ENCODE measurements at regions of chr14 and their contacts with region 1.

Region 1: DNA sequence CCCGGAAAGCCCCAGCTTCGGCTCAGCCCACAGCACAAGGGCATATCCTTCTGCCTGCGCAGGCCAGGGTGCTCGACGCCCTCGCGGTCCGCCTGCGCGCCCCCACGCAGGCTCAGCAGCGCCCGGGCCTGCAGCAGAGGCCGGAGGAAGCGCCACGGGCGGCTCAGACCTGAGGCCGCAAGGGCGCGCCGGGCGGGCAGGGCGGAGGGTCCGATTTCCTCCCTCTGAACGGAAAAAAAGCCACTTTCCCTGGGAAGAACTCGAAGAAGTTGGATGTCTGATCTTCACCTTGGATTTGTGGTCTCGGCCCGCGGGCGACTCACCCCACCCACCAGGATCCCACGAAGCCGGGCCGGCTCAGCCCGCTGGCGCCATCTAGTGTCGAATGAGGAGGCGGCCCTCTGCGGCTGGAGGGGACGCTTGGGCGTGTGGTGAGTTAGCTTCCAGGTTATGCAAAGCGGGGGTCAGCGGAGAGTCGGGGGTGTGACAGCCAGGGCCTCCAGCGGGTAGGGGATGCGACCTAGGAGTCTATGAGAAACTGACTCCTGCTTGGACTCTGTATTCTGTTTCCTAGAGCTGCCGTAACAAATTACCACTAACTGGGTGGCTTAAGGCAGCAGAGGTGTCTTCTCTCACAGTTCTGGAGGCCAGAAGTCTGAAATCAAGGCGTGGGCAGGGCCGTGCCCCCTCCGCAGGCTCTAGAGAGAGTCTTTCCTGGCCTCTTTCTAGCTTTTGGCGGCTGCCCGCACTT is 40.0 kb upstream of the SRSF5 start:
- DNase-seq: peak; percentile 75
- H3K4me3 ChIP-seq: peak overlapping the region; percentile 2 to 40 (median 18)
- H3K27ac ChIP-seq: peak overlapping the region; percentile 20
- H3K4me1 ChIP-seq: peaks cover 5% of the 10 kb centered on the region
- H3K27me3 ChIP-seq: no peaks in the 10 kb centered on the region
- CTCF ChIP-seq: peak; percentile 98 to 99
- POLR2A ChIP-seq: no peak

Region 2: GRCh38 chr14:69475194-69475818 is 251.6 kb before region 1 on chr14:
- CTCF ChIA-PET with region 1: interaction called, 3 read pairs
- POLR2A ChIA-PET with region 1: no interaction called
- dilution Hi-C with region 1: no loop called
- intact Hi-C with region 1: loop called (anchors 10 kb)
- DNase-seq: peak; percentile 25
- H3K4me3 ChIP-seq: no peak overlapping the region
- H3K27ac ChIP-seq: no peak overlapping the region
- H3K4me1 ChIP-seq: no peaks in the 10 kb centered on the region
- H3K27me3 ChIP-seq: peaks cover 0 to 3% of the 10 kb centered on the region in 2 experiments
- CTCF ChIP-seq: peak; percentile 25 to 34
- POLR2A ChIP-seq: no peak

Region 3: DNA sequence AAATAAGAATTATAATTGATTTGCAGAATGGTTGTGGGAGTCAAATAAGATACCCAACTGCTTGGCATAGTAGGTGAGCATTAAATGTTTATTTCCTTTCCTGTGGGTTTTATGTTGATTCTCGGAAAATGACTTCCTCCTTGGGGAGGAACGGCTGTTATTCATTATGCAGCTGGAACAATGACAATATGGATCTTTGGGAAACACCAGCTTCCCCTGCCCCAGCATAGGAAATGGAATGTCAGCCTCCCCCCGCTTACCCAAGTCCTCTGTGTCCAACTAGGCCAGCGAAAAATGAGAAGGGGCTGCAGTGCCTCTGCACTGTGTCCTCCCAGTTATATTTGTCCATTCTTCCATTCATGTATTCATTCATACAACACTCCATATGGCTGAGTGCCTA is 140.5 kb before region 1 on chr14:
- CTCF ChIA-PET with region 1: interaction called, 124 read pairs
- POLR2A ChIA-PET with region 1: no interaction called
- dilution Hi-C with region 1: no loop called
- intact Hi-C with region 1: loop called (anchors 1 kb)
- DNase-seq: peak; percentile 90
- H3K4me3 ChIP-seq: no peak overlapping the region
- H3K27ac ChIP-seq: no peak overlapping the region
- H3K4me1 ChIP-seq: peaks cover 20% of the 10 kb centered on the region
- H3K27me3 ChIP-seq: no peaks in the 10 kb centered on the region
- CTCF ChIP-seq: no peak
- POLR2A ChIP-seq: no peak

Region 4: DNA sequence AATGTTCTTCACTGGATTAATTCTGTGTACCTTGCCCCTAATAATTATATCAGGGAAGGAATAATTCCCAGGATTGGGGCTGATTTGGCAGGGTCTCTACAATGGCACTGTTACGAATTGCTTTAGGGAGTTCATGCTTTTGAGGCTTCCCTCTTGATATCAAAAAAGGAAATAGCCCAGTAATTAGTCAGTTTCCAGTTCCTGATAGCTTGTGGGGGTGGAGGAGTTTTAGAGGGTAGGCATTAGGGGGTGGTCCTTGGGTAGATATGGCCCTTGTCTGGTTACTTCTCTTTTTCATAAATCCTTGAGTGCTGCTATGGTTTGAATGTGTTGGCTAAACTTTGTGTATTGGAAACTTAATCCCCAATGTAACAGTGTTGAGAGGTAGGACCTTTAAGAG is 33.9 kb after region 1 on chr14:
- CTCF ChIA-PET with region 1: interaction called, 23 read pairs
- POLR2A ChIA-PET with region 1: no interaction called
- dilution Hi-C with region 1: no loop called
- intact Hi-C with region 1: loop called (anchors 1 kb)
- DNase-seq: peak; percentile 70
- H3K4me3 ChIP-seq: peak overlapping the region in 1 of 3 experiments; percentile 36
- H3K27ac ChIP-seq: peak overlapping the region; percentile 83
- H3K4me1 ChIP-seq: peaks cover 19% of the 10 kb centered on the region
- H3K27me3 ChIP-seq: no peaks in the 10 kb centered on the region
- CTCF ChIP-seq: no peak
- POLR2A ChIP-seq: peak; percentile 40

Region 5: DNA sequence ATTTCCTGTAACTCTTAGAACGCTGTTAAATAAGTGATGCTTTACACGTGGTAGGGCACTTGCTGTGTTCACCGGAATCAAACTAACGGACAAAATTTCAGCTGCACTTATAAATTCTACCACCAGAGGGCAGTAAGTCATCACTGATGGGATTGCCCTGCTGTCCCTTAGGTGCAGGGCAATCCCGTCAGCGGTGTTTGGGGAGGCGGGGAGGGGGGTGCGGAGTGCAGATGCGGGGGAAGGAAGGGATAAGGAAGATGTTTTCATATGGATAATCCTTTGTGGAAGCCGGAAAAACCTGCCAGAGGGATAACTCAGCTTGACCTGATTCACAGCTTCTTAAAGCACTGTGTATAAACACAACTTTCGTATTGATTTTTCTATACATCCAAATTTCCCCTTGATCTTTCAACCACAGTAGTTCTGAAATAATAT is 91.8 kb after region 1 on chr14:
- CTCF ChIA-PET with region 1: interaction called, 38 read pairs
- POLR2A ChIA-PET with region 1: no interaction called
- dilution Hi-C with region 1: no loop called
- intact Hi-C with region 1: loop called (anchors 1 kb)
- DNase-seq: peak; percentile 83
- H3K4me3 ChIP-seq: no peak overlapping the region
- H3K27ac ChIP-seq: no peak overlapping the region
- H3K4me1 ChIP-seq: no peaks in the 10 kb centered on the region
- H3K27me3 ChIP-seq: peaks cover 4 to 14% of the 10 kb centered on the region in 2 experiments
- CTCF ChIP-seq: peak; percentile 71 to 72
- POLR2A ChIP-seq: no peak

Region 6: GRCh38 chr14:70027785-70028428 is 301.0 kb after region 1 on chr14:
- CTCF ChIA-PET with region 1: interaction called, 133 read pairs
- POLR2A ChIA-PET with region 1: no interaction called
- dilution Hi-C with region 1: no loop called
- intact Hi-C with region 1: loop called (anchors 1 kb)
- DNase-seq: peak; percentile 56
- H3K4me3 ChIP-seq: no peak overlapping the region
- H3K27ac ChIP-seq: no peak overlapping the region
- H3K4me1 ChIP-seq: no peaks in the 10 kb centered on the region
- H3K27me3 ChIP-seq: peaks cover 0 to 2% of the 10 kb centered on the region in 2 experiments
- CTCF ChIP-seq: peak; percentile 91 to 92
- POLR2A ChIP-seq: no peak